ENCODE measurements at regions of chr20 and their contacts with region 1.

Region 1: GRCh38 chr20:1437235-1437904 is 29.3 kb downstream of the NSFL1C start:
- DNase-seq: peak in 1 of 2 experiments; percentile 80
- H3K4me3 ChIP-seq: no peak overlapping the region
- H3K27ac ChIP-seq: no peak overlapping the region
- H3K4me1 ChIP-seq: no peaks in the 10 kb centered on the region
- H3K27me3 ChIP-seq: no peaks in the 10 kb centered on the region
- CTCF ChIP-seq: peak; percentile 85 to 91 (median 87)
- EP300 ChIP-seq: no peak
- POLR2A ChIP-seq: no peak
- RAD21 ChIP-seq: peak; percentile 83 to 84

Region 2: GRCh38 chr20:1313236-1313964 is 124.0 kb before region 1 on chr20:
- CTCF ChIA-PET with region 1: interaction called, 20 read pairs
- POLR2A ChIA-PET with region 1: no interaction called
- DNase-seq: peak in 1 of 2 experiments; percentile 91
- H3K4me3 ChIP-seq: peak overlapping the region; percentile 34 to 73 (median 58)
- H3K27ac ChIP-seq: no peak overlapping the region
- H3K4me1 ChIP-seq: peaks cover 0 to 2% (median 0%) of the 10 kb centered on the region in 4 experiments; a peak in 4 of 7 replicates
- H3K27me3 ChIP-seq: peaks cover 0 to 12% (median 10%) of the 10 kb centered on the region in 4 experiments; a peak in 5 of 7 replicates
- CTCF ChIP-seq: peak; percentile 88 to 93 (median 92)
- EP300 ChIP-seq: no peak
- POLR2A ChIP-seq: no peak
- RAD21 ChIP-seq: peak; percentile 80 to 88

Region 3: GRCh38 chr20:1397710-1398109 is 39.7 kb before region 1 on chr20:
- CTCF ChIA-PET with region 1: interaction called, 19 read pairs
- POLR2A ChIA-PET with region 1: interaction called, 3 read pairs
- DNase-seq: no peak
- H3K4me3 ChIP-seq: no peak overlapping the region
- H3K27ac ChIP-seq: no peak overlapping the region
- H3K4me1 ChIP-seq: peaks cover 0 to 6% (median 0%) of the 10 kb centered on the region in 4 experiments; a peak in 1 of 7 replicates
- H3K27me3 ChIP-seq: peaks cover 0 to 19% (median 8%) of the 10 kb centered on the region in 4 experiments; a peak in 5 of 7 replicates
- CTCF ChIP-seq: peak in 2 of 3 experiments; percentile 40 to 58; a peak in 3 of 4 replicates
- EP300 ChIP-seq: no peak
- POLR2A ChIP-seq: no peak
- RAD21 ChIP-seq: peak; percentile 54 to 59

Region 4: DNA sequence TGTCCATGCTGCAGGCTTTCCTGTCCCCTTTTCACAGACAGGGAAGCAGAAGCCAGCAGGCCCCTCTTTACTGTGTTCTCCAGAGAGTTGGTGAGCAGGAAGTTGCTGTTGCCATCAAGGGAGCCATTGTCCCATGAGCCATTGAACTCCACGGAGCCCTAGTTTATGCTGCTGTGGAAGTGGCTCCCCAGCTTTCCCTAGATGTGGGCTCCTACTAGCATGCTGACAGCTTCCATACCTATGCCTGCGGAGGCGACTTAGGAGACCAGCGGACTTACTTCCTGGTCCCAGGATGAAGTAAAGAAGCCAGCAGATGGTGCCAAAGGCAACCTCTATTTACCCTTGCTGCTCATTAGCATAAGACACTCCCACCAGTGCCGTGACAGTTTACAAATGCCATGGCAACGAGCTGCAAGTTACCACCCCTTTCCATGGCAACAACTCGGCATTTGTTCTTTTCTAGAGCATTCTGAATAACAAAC is 13.7 kb before region 1 on chr20:
- CTCF ChIA-PET with region 1: interaction called, 139 read pairs
- POLR2A ChIA-PET with region 1: interaction called, 13 read pairs
- DNase-seq: peak; percentile 65 to 80
- H3K4me3 ChIP-seq: no peak overlapping the region
- H3K27ac ChIP-seq: no peak overlapping the region
- H3K4me1 ChIP-seq: peaks cover 7 to 21% (median 12%) of the 10 kb centered on the region in 4 experiments; a peak in 6 of 7 replicates
- H3K27me3 ChIP-seq: no peaks in the 10 kb centered on the region
- CTCF ChIP-seq: peak; percentile 28 to 71 (median 57)
- EP300 ChIP-seq: peak in 1 of 2 experiments; percentile 54; a peak in 1 of 3 replicates
- POLR2A ChIP-seq: no peak
- RAD21 ChIP-seq: peak; percentile 60 to 71

Region 5: DNA sequence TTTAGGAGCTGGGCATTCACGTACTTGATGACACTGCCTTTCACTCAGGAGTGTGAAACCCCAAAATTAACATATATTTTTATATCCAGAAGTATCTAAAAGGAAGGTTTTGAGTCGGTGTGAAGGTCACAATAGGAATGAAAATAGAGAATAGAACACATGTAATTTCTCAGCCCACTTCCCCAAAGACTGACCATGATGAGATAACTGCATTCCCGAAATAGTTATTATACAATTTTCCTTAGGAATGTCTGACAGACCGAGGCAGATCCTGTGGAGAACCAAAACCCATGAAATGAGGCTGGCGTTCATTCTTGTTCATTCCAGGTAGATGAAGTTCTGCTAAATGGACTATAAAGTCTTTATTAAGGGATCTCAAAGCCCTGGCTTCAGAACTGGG is 18.9 kb after region 1 on chr20:
- CTCF ChIA-PET with region 1: interaction called, 76 read pairs
- POLR2A ChIA-PET with region 1: interaction called, 4 read pairs
- DNase-seq: no peak
- H3K4me3 ChIP-seq: no peak overlapping the region
- H3K27ac ChIP-seq: no peak overlapping the region
- H3K4me1 ChIP-seq: no peaks in the 10 kb centered on the region
- H3K27me3 ChIP-seq: no peaks in the 10 kb centered on the region
- CTCF ChIP-seq: no peak
- EP300 ChIP-seq: no peak
- POLR2A ChIP-seq: no peak
- RAD21 ChIP-seq: no peak

Region 6: GRCh38 chr20:1646975-1647431 is 209.6 kb after region 1 on chr20:
- CTCF ChIA-PET with region 1: no interaction called
- POLR2A ChIA-PET with region 1: no interaction called
- DNase-seq: peak in 1 of 2 experiments; percentile 10
- H3K4me3 ChIP-seq: no peak overlapping the region
- H3K27ac ChIP-seq: no peak overlapping the region
- H3K4me1 ChIP-seq: no peaks in the 10 kb centered on the region
- H3K27me3 ChIP-seq: no peaks in the 10 kb centered on the region
- CTCF ChIP-seq: no peak
- EP300 ChIP-seq: no peak
- POLR2A ChIP-seq: no peak
- RAD21 ChIP-seq: no peak

Measured in H1 (cell line).